MCF 10A (cell line): ENCODE measurements at regions of chr15 and their contacts with region 1.

Region 1: DNA sequence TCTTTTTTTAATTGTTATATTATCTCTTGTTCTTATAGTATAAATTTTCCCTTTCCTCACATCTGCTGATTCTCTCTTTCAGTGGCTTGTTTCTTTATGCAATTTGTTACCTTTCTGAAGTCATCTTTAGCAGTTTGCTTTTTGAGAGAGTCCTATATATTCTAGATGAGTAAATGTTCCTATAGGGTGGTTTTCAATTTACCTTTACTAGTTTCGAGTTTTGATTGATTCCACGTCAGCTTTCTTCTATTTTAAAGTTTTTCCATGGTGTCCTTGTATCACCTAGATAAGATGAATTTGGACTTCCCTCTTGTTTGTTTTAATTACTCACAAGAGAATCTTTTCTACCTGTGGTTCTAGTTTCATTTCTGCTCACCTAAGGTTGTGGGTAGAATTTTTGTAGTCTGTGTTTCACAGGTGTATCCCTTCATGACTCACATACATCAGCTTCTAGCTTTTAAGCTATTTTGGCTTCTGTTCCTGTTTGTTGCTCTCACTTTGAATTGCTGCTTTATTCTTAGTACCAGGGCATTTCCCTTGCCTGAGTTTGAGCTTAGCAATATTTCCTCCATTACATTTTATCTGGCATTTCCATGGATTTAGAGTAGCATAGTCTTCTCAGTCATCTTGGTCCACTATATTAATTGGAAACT is 6.4 kb downstream of the TEX9 start:
- DNase-seq: peak; percentile 25
- H3K4me3 Mint-ChIP-seq: peak overlapping the region; percentile 51
- H3K27ac Mint-ChIP-seq: peak overlapping the region; percentile 70
- H3K4me1 Mint-ChIP-seq: peaks cover 35% of the 10 kb centered on the region
- H3K27me3 Mint-ChIP-seq: no peaks in the 10 kb centered on the region
- CTCF ChIP-seq: no peak

Region 2: GRCh38 chr15:56252386-56252785 is 119.2 kb before region 1 on chr15:
- CTCF ChIA-PET with region 1: interaction called, 12 read pairs
- POLR2A ChIA-PET with region 1: interaction called, 11 read pairs
- intact Hi-C with region 1: no loop called
- DNase-seq: no peak
- H3K4me3 Mint-ChIP-seq: no peak overlapping the region
- H3K27ac Mint-ChIP-seq: no peak overlapping the region
- H3K4me1 Mint-ChIP-seq: no peaks in the 10 kb centered on the region
- H3K27me3 Mint-ChIP-seq: no peaks in the 10 kb centered on the region
- CTCF ChIP-seq: no peak

Region 3: GRCh38 chr15:57017024-57017423 is 645.4 kb after region 1 on chr15:
- CTCF ChIA-PET with region 1: no interaction called
- POLR2A ChIA-PET with region 1: no interaction called
- intact Hi-C with region 1: no loop called
- DNase-seq: peak; percentile 33
- H3K4me3 Mint-ChIP-seq: no peak overlapping the region
- H3K27ac Mint-ChIP-seq: no peak overlapping the region
- H3K4me1 Mint-ChIP-seq: peaks cover 36% of the 10 kb centered on the region
- H3K27me3 Mint-ChIP-seq: no peaks in the 10 kb centered on the region
- CTCF ChIP-seq: no peak